H1 (cell line): ENCODE measurements at regions of chr3 and their contacts with region 1.

Region 1: DNA sequence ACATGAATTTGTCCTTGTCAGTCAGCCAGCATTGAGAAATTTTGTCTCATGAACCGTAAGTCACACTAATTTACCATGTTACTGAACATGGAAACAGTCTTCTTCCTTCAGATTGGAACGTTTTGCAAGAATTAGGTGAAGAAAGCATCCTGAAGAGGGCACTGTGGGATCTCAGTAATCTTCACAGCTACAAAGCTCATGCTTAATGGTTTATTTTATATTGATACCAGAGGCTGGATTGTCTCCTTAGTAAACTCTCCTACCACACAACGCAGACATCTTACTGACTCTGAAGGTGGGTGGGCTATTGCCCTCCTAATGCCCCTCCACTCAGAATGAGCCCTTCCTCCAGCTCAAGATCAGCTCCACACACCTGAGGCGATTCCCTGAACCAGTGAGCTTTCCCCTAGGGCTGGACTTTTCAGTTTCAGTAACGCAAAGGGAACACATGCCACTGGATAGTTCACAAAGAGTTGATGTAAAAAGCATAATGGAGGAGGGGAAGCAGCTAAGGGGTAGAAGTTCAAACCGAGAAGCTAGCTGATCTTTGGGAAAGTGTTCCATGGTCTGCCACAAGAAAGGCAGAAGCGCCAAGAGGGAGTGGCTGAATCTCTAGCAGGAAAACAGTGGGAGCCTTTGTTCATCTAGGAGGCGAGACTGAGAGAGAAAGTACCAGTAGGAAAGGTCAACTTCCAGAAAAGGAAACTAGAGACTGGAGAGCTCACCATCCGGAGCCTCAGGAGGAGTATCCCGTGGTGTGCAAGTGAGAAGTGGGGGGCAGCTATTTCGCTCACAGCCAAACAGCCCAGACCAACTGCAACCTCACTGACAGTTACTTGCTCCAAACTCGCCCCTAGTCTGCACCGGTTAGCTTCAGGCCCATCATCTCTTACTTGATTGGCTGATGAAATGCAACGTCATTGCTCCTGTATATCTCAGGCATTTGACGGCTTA is at the start of gene SLC9C1:
- DNase-seq: peak in 1 of 2 experiments; percentile 75
- H3K4me3 ChIP-seq: peak within 1 kb of the TSS in 1 of 4 experiments; percentile 2; a peak in 2 of 8 replicates
- H3K27ac ChIP-seq: 0 out of 2 replicates have a peak within 1 kb of the TSS, but pooled peaks have one; percentile 2
- H3K4me1 ChIP-seq: peaks cover 0 to 6% (median 4%) of the 10 kb centered on the region in 4 experiments; a peak in 5 of 7 replicates
- H3K27me3 ChIP-seq: no peaks in the 10 kb centered on the region
- CTCF ChIP-seq: peak in 2 of 3 experiments; percentile 56 to 80; a peak in 2 of 4 replicates
- EP300 ChIP-seq: no peak
- POLR2A ChIP-seq: no peak
- RAD21 ChIP-seq: peak; percentile 84 to 87
- total RNA-seq, gene SLC9C1: 0.24 and 1.1 TPM in 2 replicates

Region 2: GRCh38 chr3:112111785-112112402 is 181.8 kb before region 1 on chr3:
- CTCF ChIA-PET with region 1: interaction called, 19 read pairs
- POLR2A ChIA-PET with region 1: no interaction called
- DNase-seq: peak in 1 of 2 experiments; percentile 31
- H3K4me3 ChIP-seq: no peak overlapping the region
- H3K27ac ChIP-seq: no peak overlapping the region
- H3K4me1 ChIP-seq: peaks cover 0 to 5% (median 0%) of the 10 kb centered on the region in 4 experiments; a peak in 1 of 7 replicates
- H3K27me3 ChIP-seq: no peaks in the 10 kb centered on the region
- CTCF ChIP-seq: peak; percentile 65 to 94 (median 86)
- EP300 ChIP-seq: no peak
- POLR2A ChIP-seq: no peak
- RAD21 ChIP-seq: peak; percentile 96 to 99

Region 3: GRCh38 chr3:112273536-112273935 is 20.1 kb before region 1 on chr3:
- CTCF ChIA-PET with region 1: interaction called, 11 read pairs
- POLR2A ChIA-PET with region 1: no interaction called
- DNase-seq: no peak
- H3K4me3 ChIP-seq: no peak overlapping the region
- H3K27ac ChIP-seq: no peak overlapping the region
- H3K4me1 ChIP-seq: no peaks in the 10 kb centered on the region
- H3K27me3 ChIP-seq: peaks cover 0 to 1% (median 0%) of the 10 kb centered on the region in 4 experiments; a peak in 1 of 7 replicates
- CTCF ChIP-seq: no peak
- EP300 ChIP-seq: no peak
- POLR2A ChIP-seq: no peak
- RAD21 ChIP-seq: no peak

Region 4: GRCh38 chr3:112314649-112315048 is 21.0 kb after region 1 on chr3:
- CTCF ChIA-PET with region 1: interaction called, 30 read pairs
- POLR2A ChIA-PET with region 1: no interaction called
- DNase-seq: no peak
- H3K4me3 ChIP-seq: no peak overlapping the region
- H3K27ac ChIP-seq: no peak overlapping the region
- H3K4me1 ChIP-seq: peaks cover 0 to 4% (median 2%) of the 10 kb centered on the region in 4 experiments; a peak in 4 of 7 replicates
- H3K27me3 ChIP-seq: no peaks in the 10 kb centered on the region
- CTCF ChIP-seq: no peak
- EP300 ChIP-seq: no peak
- POLR2A ChIP-seq: no peak
- RAD21 ChIP-seq: no peak

Region 5: GRCh38 chr3:112333002-112333380 is 39.3 kb after region 1 on chr3 and contains the start of gene CD200:
- CTCF ChIA-PET with region 1: interaction called, 29 read pairs
- POLR2A ChIA-PET with region 1: interaction called, 18 read pairs
- DNase-seq: no peak
- H3K4me3 ChIP-seq: peak within 1 kb of the TSS; percentile 63 to 86 (median 84)
- H3K27ac ChIP-seq: peak within 1 kb of the TSS; percentile 91
- H3K4me1 ChIP-seq: peaks cover 2 to 22% (median 10%) of the 10 kb centered on the region in 4 experiments; a peak in 6 of 7 replicates
- H3K27me3 ChIP-seq: no peaks in the 10 kb centered on the region
- CTCF ChIP-seq: peak in 1 of 3 experiments; percentile 1; a peak in 1 of 4 replicates
- EP300 ChIP-seq: no peak
- POLR2A ChIP-seq: peak in 1 of 2 experiments; percentile 75; a peak in 1 of 3 replicates
- RAD21 ChIP-seq: no peak
- total RNA-seq, gene CD200: 50.2 and 51.9 TPM in 2 replicates

Region 6: DNA sequence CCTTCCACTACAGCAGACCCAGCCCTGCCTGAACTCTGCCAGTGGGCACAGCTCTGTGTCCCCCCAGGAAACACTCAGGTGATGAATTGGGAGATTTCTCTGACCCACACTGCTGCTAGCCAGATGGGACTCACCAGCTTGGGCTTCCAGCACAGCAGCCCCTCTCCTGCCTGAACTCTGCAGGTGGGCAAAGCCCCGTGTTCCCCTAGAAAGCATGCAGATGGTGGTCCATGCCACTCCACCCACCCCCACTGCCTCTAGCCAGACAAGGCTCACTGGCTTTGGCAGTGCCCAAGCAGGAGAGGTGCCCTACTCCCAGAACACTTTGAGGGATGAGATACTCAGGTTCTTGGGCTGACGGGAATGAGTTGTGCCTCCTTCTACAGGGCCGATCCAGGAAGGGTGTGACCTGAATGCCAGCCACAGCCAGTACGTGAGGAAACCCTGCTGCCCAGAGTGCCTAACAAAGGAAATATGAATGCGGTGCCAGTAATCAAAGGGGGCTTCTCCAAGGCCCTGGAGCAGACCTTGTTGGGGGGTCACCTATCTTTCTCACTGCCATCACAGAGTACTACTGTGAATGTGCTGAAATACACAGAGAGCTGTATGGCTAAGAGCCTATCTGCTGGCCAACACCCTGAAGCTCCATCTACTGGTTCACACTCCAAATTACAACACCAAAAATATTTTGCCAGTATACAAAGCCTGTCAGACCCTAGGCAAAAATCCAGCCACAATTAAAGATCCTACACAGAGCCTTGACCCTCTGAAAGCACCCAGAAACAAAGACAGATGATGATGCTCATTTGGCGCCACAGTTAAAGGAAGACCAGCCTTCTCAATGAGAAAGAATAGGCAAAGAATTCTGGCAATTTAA is 143.7 kb after region 1 on chr3:
- CTCF ChIA-PET with region 1: interaction called, 42 read pairs
- POLR2A ChIA-PET with region 1: no interaction called
- DNase-seq: no peak
- H3K4me3 ChIP-seq: no peak overlapping the region
- H3K27ac ChIP-seq: no peak overlapping the region
- H3K4me1 ChIP-seq: no peaks in the 10 kb centered on the region
- H3K27me3 ChIP-seq: no peaks in the 10 kb centered on the region
- CTCF ChIP-seq: peak in 2 of 3 experiments; percentile 73 to 77; a peak in 3 of 4 replicates
- EP300 ChIP-seq: no peak
- POLR2A ChIP-seq: no peak
- RAD21 ChIP-seq: peak; percentile 83 to 89

Region 7: DNA sequence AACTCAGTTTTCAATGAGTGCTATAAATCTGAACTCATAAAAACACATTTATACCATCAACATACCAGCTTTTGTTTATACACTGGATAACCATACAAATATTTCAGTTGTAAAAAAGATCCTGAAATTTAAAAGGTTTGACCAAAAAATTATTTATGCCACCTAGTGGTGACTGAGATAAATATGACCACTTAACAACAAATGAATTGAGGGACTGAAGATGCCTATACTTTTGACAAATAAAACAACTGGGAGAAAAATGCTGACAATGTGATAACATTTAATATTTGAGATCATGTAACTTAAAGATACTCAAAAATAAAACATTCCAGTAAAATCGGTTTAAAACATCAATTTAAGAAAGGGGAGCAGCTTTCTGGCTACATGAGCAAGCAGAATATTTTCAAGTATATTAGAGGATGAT is 237.7 kb after region 1 on chr3:
- CTCF ChIA-PET with region 1: interaction called, 11 read pairs
- POLR2A ChIA-PET with region 1: no interaction called
- DNase-seq: no peak
- H3K4me3 ChIP-seq: no peak overlapping the region
- H3K27ac ChIP-seq: no peak overlapping the region
- H3K4me1 ChIP-seq: no peaks in the 10 kb centered on the region
- H3K27me3 ChIP-seq: no peaks in the 10 kb centered on the region
- CTCF ChIP-seq: peak in 1 of 3 experiments; percentile 6; a peak in 2 of 4 replicates
- EP300 ChIP-seq: no peak
- POLR2A ChIP-seq: no peak
- RAD21 ChIP-seq: no peak; a peak in 1 of 4 replicates